Activated naive CD4-positive, alpha-beta T cell treated with anti-CD3 and anti-CD28 coated beads for 36 hours (primary cell): ENCODE measurements at regions of chr14 and their contacts with region 1.

Region 1: DNA sequence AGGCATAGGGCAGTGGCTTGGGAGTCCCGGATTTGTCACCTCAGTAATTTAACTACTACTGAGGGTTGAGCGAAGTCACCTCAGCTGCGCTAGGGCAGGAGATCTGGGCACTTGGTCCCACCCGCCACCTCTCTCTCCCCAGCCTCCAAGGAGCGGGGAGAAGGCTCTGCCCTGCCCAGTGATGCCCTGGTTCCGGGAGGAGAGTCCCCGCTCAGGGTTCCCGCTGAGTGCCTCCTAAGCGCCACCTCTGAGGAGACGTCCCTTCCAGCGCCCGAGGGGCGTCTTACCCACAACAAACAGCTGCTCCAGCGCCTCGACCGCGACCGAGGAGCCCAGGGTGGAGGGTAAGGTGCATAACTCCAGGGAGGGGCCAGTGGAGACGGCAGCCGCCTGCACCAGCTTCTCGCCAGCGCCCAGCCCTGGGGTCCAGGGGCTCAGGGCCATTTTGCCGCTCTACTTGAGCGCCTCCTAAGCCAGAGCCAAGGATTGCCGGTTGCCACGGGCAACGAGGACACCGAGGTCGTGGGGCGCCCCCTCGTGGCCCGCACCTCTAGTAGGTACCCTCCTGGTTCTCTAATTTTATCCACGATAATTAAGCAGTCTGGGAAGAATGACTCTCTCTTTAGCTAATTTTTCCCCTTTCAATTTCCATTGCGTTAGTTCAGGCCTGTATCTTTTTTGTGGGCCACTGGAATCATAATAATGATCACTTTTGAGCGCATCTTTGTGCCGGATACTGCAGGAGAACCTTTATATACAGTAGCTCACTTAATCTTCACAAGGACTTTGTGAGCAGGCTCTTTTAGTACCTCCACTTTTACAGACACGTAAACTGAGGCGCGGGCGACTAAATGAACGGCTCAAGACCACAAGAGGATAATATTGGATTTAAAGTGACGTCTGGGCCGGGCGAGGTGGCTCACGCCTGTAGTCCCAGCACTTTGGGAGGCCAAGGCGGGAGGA is at the start of gene CCDC175:
- DNase-seq: peak; percentile 89
- H3K4me3 Mint-ChIP-seq: peak within 1 kb of the TSS; percentile 65
- H3K27ac Mint-ChIP-seq: no peak within 1 kb of the TSS
- H3K4me1 Mint-ChIP-seq: peaks cover 5% of the 10 kb centered on the region
- H3K27me3 Mint-ChIP-seq: peaks cover 3% of the 10 kb centered on the region
- total RNA-seq, gene CCDC175: not detected

Region 2: DNA sequence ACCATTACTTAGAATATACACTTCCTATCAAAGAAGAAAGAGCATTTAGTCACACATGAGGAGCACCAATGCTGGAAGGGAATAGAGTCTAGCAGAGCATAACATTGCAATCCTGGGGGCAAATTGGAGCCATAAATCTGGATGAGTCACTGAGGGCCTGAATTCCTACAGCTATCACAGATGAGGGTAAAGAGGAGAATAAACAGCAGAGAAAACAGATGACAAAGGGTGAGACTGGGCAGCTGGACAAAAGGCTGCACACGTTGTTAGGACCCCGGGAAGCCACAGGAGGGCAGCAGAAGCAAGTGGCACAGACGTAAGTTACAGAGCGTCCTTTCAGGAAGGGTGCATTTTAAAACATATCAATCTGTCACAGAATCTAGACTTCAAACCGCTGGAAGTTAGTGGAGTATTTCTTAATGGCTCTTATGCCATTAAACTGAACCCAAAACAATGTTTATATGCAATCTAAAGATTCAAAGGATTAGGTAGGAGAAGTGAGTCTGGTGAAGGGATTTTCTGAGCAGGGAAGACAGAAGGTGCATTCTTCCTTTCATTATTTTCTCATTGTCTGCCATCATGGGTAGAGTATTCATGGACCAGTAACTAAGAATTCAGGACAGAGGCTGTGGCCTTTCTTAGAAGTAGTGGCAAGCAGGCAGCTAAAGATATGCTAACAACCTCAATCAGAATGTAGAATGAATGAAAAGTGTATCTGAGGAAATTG is 548.0 kb before region 1 on chr14:
- CTCF ChIA-PET with region 1: no interaction called
- intact Hi-C with region 1: loop called (anchors 1 kb)
- DNase-seq: peak; percentile 62
- H3K4me3 Mint-ChIP-seq: no peak overlapping the region
- H3K27ac Mint-ChIP-seq: no peak overlapping the region
- H3K4me1 Mint-ChIP-seq: peaks cover 4% of the 10 kb centered on the region
- H3K27me3 Mint-ChIP-seq: no peaks in the 10 kb centered on the region

Region 3: GRCh38 chr14:59507063-59507780 is 69.4 kb before region 1 on chr14:
- CTCF ChIA-PET with region 1: interaction called, 41 read pairs
- intact Hi-C with region 1: loop called (anchors 1 kb)
- DNase-seq: peak; percentile 74
- H3K4me3 Mint-ChIP-seq: no peak overlapping the region
- H3K27ac Mint-ChIP-seq: no peak overlapping the region
- H3K4me1 Mint-ChIP-seq: peaks cover 7% of the 10 kb centered on the region
- H3K27me3 Mint-ChIP-seq: peaks cover 5% of the 10 kb centered on the region